ENCODE measurements at regions of chrX and their contacts with region 1.

Region 1: DNA sequence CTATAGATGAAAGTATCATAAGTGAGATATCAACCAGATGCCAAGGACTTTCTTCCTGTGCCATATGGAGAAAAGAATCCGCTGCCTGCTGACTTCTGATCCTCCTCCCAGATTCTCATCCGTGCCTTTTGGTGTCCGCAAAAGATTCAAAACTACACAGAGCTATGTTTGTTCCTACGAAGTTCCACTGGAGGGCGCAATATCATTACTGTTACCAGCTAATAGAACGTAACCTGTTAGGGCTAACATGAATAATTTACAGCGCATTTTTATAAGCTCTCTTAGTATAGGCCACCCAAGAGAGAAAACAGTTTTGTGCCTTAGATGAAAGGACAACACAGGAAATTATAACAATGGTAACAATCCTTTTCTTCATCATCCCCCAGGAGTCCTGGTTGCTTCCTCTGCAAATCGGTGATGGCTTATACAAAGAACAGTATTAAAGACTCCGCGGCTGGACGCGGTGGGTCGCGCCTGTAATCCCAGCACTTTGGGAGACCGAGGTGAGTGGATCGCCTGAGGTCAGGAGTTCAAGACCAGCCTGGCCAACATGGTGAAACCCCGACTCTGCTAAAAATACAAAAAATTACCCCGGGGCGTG is 22.8 kb upstream of the CENPVL3 start:
- DNase-seq: peak; percentile 10
- ATAC-seq: no peak
- H3K4me3 Mint-ChIP-seq: no peak overlapping the region
- H3K27ac Mint-ChIP-seq: no peak overlapping the region
- H3K4me1 Mint-ChIP-seq: no peaks in the 10 kb centered on the region
- H3K27me3 Mint-ChIP-seq: peaks cover 22% of the 10 kb centered on the region

Region 2: DNA sequence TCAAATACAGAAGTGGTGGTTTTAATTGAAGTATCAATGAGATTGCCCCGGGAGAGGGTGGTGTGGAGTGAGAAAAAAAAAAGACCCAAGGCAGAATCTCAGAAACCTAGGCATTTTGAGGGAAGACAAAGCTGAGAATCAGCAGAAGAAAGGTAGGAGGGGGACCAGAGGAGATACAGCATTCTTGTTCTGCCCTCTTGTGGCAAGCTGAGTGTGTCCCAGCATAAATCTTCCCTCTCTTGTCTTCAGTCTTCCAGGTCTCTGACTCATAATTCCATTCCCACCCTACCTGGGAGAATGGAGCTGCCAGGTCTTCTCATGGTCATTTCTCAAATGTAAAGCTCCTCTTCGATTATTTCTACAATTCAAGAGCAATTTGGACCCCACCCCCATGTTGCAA is 219.2 kb after region 1 on chrX:
- CTCF ChIA-PET with region 1: interaction called, 4 read pairs
- POLR2A ChIA-PET with region 1: no interaction called
- intact Hi-C with region 1: loop called in 1 of 2 experiments (anchors 2 kb)
- DNase-seq: peak; percentile 5
- ATAC-seq: no peak
- H3K4me3 Mint-ChIP-seq: no peak overlapping the region
- H3K27ac Mint-ChIP-seq: no peak overlapping the region
- H3K4me1 Mint-ChIP-seq: peaks cover 11% of the 10 kb centered on the region
- H3K27me3 Mint-ChIP-seq: no peaks in the 10 kb centered on the region